ENCODE measurements at regions of chr5 and their contacts with region 1.

Region 1: DNA sequence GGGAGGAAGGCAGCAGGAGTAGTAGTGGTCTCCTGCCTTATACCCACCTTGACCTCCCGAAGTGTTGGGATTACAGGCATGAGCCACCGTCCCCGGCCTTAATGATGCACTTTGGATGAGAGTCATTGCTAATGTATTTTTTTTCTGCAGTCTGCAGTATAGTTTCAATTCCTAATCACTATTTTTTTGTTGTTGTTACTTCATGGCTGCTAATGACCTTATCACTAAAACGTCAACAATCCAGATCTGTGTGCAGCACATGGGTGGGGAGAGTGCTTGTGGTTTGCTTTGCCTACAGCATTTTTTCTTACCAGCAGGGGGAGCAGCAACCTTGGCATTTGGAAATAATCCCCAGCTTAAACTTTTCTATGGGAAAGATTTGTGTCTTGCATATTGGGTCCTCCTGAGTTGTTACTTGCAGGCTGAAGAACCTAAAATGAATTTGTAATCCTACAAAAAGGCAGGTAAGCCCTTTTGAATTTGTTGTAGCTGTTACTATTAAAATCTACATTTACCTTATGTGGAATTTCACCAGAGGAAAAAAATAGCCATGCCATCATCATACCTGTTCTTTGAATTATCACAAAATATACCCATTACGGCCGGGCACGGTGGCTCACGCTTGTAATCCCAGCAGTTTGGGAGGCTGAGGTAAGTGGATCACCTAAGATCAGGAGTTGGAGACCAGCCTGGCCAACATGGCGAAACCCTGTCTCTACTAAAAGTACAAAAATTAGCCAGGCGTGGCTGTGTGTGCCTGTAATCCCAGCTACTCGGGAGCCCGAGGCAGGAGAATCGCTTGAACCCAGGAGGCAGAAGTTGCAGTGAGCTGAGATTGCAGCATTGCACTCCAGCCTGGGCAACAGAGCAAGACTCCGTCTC is 6.3 kb upstream of the MED7 start:
- DNase-seq: peak; percentile 84 to 88 (median 85)
- H3K4me3 ChIP-seq: no peak overlapping the region
- H3K4me3 Mint-ChIP-seq: peak overlapping the region in 6 of 8 donors; percentile 23 to 66 (median 42)
- H3K27ac ChIP-seq: no peak overlapping the region
- H3K27ac Mint-ChIP-seq: peak overlapping the region; percentile 31 to 94 (median 85)
- H3K4me1 ChIP-seq: peaks cover 36% of the 10 kb centered on the region
- H3K4me1 Mint-ChIP-seq: peaks cover 28 to 42% (median 35%) of the 10 kb centered on the region in 4 donors
- H3K27me3 ChIP-seq: no peaks in the 10 kb centered on the region
- H3K27me3 Mint-ChIP-seq: no peaks in the 10 kb centered on the region

Region 2: DNA sequence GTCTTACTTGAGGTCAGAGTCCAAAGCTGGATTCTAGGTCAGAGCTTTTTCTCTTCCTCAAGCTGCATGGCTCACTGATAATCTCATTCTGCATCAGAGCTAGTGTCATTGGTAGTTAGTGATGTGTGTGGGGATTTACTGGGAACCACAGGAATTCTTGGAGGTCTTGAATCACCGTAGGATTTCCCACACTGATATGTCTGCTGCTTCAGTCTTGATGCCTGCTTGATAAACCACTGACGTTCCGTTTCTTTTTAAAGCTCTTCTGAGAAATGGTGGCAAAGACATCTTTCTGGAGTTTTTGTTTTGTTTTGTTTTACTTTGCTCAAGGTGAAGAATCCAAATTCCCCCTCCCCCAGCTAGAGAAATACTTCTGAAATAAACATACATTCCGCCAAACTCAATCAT is 18.2 kb after region 1 on chr5:
- CTCF ChIA-PET with region 1: interaction called, 15 read pairs
- POLR2A ChIA-PET with region 1: interaction called, 28 read pairs
- intact Hi-C with region 1: no loop called
- DNase-seq: no peak
- H3K4me3 ChIP-seq: peak overlapping the region in 1 of 2 donors; percentile 12
- H3K4me3 Mint-ChIP-seq: peak overlapping the region; percentile 4 to 85 (median 67)
- H3K27ac ChIP-seq: peak overlapping the region; percentile 56
- H3K27ac Mint-ChIP-seq: peak overlapping the region; percentile 71 to 95 (median 80)
- H3K4me1 ChIP-seq: peaks cover 42% of the 10 kb centered on the region
- H3K4me1 Mint-ChIP-seq: peaks cover 42 to 85% (median 58%) of the 10 kb centered on the region in 4 donors
- H3K27me3 ChIP-seq: no peaks in the 10 kb centered on the region
- H3K27me3 Mint-ChIP-seq: no peaks in the 10 kb centered on the region

Region 3: DNA sequence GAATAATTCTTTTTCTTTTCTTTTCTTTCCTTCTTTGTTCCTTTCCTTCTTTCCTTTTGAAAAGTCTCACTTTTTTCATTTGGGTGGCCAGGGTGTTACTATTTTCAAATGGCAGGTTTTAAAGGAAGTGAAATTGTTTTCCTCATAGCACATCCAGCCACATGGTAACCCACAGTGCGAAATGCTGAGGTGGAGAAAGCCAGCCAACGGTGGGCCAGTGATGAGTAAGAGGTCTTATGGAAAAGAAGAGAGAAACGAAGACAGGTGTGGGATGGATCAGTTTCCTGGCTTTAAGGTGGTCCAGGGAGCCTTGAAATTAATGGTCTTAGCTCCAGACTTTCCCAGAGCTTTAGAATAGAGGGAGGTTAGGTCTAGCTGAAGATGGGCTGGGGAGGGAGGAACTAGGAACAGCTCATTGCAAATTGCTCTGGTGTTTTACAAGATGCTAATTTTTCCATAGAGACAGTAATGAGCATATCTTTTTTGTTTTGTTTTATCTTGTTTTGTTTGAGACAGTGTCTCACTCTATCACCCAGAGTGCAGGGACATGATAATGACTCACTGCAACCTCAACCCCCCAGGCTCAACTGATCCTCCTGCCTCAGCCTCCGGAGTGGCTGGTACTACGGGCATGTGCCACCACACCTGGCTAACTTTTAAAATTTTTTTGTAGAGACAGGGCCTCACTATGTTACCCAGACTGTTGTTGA is 49.5 kb after region 1 on chr5:
- CTCF ChIA-PET with region 1: interaction called, 66 read pairs
- POLR2A ChIA-PET with region 1: interaction called, 20 read pairs
- intact Hi-C with region 1: loop called (anchors 1 kb)
- DNase-seq: peak in 1 of 5 donors; percentile 91
- H3K4me3 ChIP-seq: peak overlapping the region in 1 of 2 donors; percentile 19
- H3K4me3 Mint-ChIP-seq: peak overlapping the region; percentile 68 to 86 (median 72)
- H3K27ac ChIP-seq: peak overlapping the region; percentile 64
- H3K27ac Mint-ChIP-seq: peak overlapping the region; percentile 84 to 96 (median 92)
- H3K4me1 ChIP-seq: peaks cover 99% of the 10 kb centered on the region
- H3K4me1 Mint-ChIP-seq: peaks cover 73 to 96% (median 84%) of the 10 kb centered on the region in 4 donors
- H3K27me3 ChIP-seq: no peaks in the 10 kb centered on the region
- H3K27me3 Mint-ChIP-seq: no peaks in the 10 kb centered on the region

Region 4: GRCh38 chr5:157225469-157226422 is 76.8 kb after region 1 on chr5:
- CTCF ChIA-PET with region 1: interaction called, 26 read pairs
- POLR2A ChIA-PET with region 1: interaction called, 15 read pairs
- intact Hi-C with region 1: loop called (anchors 1 kb)
- DNase-seq: peak in 2 of 5 donors; percentile 32 to 62
- H3K4me3 ChIP-seq: no peak overlapping the region
- H3K4me3 Mint-ChIP-seq: peak overlapping the region in 7 of 8 donors; percentile 12 to 85 (median 61)
- H3K27ac ChIP-seq: peak overlapping the region; percentile 52
- H3K27ac Mint-ChIP-seq: peak overlapping the region; percentile 81 to 93 (median 91)
- H3K4me1 ChIP-seq: peaks cover 95% of the 10 kb centered on the region
- H3K4me1 Mint-ChIP-seq: peaks cover 45 to 66% (median 56%) of the 10 kb centered on the region in 4 donors
- H3K27me3 ChIP-seq: no peaks in the 10 kb centered on the region
- H3K27me3 Mint-ChIP-seq: no peaks in the 10 kb centered on the region

Region 5: GRCh38 chr5:157265714-157266285 is 116.8 kb after region 1 on chr5 and contains the start of gene CYFIP2:
- CTCF ChIA-PET with region 1: interaction called, 7 read pairs
- POLR2A ChIA-PET with region 1: interaction called, 11 read pairs
- intact Hi-C with region 1: loop called (anchors 1 kb)
- DNase-seq: peak; percentile 84 to 88 (median 85)
- H3K4me3 ChIP-seq: peak within 1 kb of the TSS; percentile 62 to 75
- H3K4me3 Mint-ChIP-seq: peak within 1 kb of the TSS; percentile 95 to 100 (median 97)
- H3K27ac ChIP-seq: peak within 1 kb of the TSS; percentile 78
- H3K27ac Mint-ChIP-seq: peak within 1 kb of the TSS; percentile 97 to 99 (median 98)
- H3K4me1 ChIP-seq: peaks cover 65% of the 10 kb centered on the region
- H3K4me1 Mint-ChIP-seq: peaks cover 48 to 82% (median 66%) of the 10 kb centered on the region in 4 donors
- H3K27me3 ChIP-seq: no peaks in the 10 kb centered on the region
- H3K27me3 Mint-ChIP-seq: no peaks in the 10 kb centered on the region
- total RNA-seq, gene CYFIP2: 317 to 325 TPM

Region 6: GRCh38 chr5:157328277-157328912 is 179.4 kb after region 1 on chr5:
- CTCF ChIA-PET with region 1: interaction called, 8 read pairs
- POLR2A ChIA-PET with region 1: no interaction called
- intact Hi-C with region 1: loop called (anchors 1 kb)
- DNase-seq: peak; percentile 66 to 69 (median 67)
- H3K4me3 ChIP-seq: no peak overlapping the region
- H3K4me3 Mint-ChIP-seq: peak overlapping the region; percentile 3 to 69 (median 58)
- H3K27ac ChIP-seq: peak overlapping the region; percentile 30
- H3K27ac Mint-ChIP-seq: peak overlapping the region; percentile 72 to 96 (median 89)
- H3K4me1 ChIP-seq: peaks cover 27% of the 10 kb centered on the region
- H3K4me1 Mint-ChIP-seq: peaks cover 23 to 44% (median 26%) of the 10 kb centered on the region in 4 donors
- H3K27me3 ChIP-seq: no peaks in the 10 kb centered on the region
- H3K27me3 Mint-ChIP-seq: no peaks in the 10 kb centered on the region